Sciatic nerve (tissue), 2 donors: ENCODE measurements at regions of chr1 and their contacts with region 1.

Region 1: GRCh38 chr1:15799004-15799936 is 8.2 kb downstream of the UQCRHL start:
- DNase-seq: peak; percentile 73
- ATAC-seq: peak; percentile 92

Region 2: GRCh38 chr1:15876357-15877055 is 77.2 kb after region 1 on chr1:
- intact Hi-C with region 1: no loop called
- DNase-seq: no peak
- ATAC-seq: peak; percentile 22

Region 3: DNA sequence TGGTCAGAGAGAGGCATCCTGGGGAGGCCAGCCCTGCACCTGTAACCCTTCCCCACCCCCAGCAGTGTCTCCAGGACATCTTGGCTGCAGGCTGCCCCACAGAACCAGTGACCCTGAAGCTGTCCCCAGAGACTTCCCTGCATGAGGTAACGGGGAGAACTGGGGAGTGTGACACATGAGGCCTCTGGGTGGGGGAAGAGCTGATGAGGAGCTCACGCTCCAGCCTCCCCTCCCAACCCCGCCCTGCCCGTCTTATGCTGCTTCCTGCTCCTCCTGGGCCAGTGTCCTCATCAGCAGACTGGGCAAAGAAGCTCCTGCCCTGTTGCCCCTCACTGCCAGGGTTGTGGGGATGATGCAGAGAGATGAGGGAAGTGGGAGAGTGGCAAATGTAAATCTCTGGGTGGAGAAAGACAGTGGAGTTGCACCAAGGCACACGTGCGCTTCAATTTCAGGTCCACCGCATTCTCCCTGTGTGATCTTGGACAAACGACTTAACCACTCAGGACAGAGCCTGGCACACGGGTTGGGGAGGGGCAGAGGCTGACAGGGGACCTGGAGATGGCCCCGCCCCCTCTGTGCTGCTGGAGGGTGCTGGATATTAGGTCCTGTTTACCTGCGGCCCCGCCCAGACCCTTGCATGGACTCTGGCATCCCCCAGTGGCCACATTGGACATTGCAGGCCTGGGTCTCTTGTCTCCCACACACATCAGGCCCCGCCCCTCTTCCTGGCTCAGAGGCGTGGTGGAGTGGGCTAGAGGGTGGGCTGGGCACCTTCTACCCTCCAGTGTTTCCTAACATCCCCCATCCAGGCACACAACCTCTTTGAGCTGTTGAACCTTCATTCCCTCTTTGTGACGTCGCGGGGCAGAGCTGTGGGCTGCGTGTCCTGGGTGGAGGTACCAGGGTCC is 256.6 kb after region 1 on chr1:
- intact Hi-C with region 1: loop called (anchors 10 kb)
- DNase-seq: peak; percentile 91
- ATAC-seq: peak; percentile 77